GM12878 (cell line): ENCODE measurements at regions of chr7 and their contacts with region 1.

Region 1: DNA sequence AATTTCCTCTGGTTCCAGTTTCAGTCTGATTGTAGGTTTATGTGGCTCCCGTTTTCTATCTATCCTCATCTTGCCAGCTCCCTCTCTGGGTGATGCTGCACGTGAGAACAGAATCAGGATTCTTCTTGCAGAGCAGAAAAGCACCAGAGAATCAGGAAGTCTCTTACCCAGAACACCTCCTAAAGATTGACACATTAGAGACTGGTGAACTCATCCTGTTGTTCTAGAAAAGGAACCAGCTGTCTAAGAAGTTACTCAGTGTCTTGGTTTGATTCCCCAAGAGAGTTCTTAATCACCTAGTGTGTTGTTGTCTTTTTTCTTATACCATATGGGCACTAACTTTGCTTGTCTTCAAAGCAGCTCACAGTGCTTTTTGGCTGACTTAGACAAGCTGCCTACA is 152.4 kb downstream of the DGKI start:
- DNase-seq: peak; percentile 17
- ATAC-seq: peak; percentile 91
- H3K4me3 ChIP-seq: no peak overlapping the region
- H3K27ac ChIP-seq: no peak overlapping the region
- H3K4me1 ChIP-seq: no peaks in the 10 kb centered on the region
- H3K27me3 ChIP-seq: no peaks in the 10 kb centered on the region
- CTCF ChIP-seq: no peak
- EP300 ChIP-seq: peak in 1 of 2 experiments; percentile 12; a peak in 1 of 4 replicates
- POLR2A ChIP-seq: no peak
- RAD21 ChIP-seq: no peak

Region 2: DNA sequence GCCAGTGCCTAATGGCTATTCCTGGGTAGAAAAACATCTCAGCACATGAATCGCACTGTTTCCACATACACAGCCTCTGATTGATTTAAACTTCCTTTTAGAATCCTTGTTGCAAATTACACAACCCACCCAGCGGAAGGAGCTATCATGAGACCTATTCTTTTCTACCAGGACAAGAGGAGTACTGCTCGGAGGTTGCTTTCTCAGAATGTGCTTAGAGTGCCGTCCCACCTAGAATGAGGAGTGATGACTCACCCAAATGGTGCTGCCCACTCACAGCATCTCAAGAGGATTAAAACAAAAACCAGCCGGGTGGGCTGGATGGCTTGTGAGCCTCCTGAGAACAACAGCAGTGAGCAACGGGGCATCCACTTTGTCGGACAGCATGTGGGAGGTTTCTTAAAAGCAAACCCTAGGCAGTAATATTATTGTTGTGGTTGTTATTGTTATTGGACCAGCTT is 23.4 kb after region 1 on chr7:
- CTCF ChIA-PET with region 1: interaction called, 3 read pairs
- POLR2A ChIA-PET with region 1: interaction called, 4 read pairs
- RAD21 ChIA-PET with region 1: interaction called, 3 read pairs
- SMC1A ChIA-PET with region 1: interaction called, 11 read pairs
- in situ Hi-C with region 1: no loop called
- intact Hi-C with region 1: no loop called
- DNase-seq: peak; percentile 3
- ATAC-seq: peak; percentile 80
- H3K4me3 ChIP-seq: no peak overlapping the region
- H3K27ac ChIP-seq: no peak overlapping the region
- H3K4me1 ChIP-seq: no peaks in the 10 kb centered on the region
- H3K27me3 ChIP-seq: no peaks in the 10 kb centered on the region
- CTCF ChIP-seq: no peak
- EP300 ChIP-seq: no peak
- POLR2A ChIP-seq: no peak
- RAD21 ChIP-seq: no peak